Left cardiac atrium (tissue), 4 donors: ENCODE measurements at regions of chr17 and their contacts with region 1.

Region 1: DNA sequence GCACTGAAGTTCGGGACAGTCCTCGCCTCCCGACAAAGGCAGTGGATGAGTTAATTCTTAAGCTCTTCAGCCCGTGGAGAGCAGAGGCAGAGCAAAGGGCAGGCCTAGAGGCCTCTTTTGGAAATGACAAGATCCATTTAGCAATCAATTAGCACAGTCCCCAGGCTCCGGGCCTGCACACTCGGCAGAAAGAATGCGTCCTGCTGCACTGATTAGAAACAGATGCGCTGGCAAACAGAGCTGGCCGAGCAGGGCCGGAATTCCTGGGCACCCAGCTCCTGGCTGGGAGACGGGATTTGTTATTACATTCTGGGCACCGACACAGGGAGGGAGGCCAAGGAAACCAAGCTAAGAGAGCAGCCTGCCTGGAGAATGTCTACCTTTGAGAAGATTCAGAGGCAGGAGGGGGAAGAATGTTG is 162.9 kb downstream of the COPRS start:
- DNase-seq: peak; percentile 81
- ATAC-seq: peak; percentile 93

Region 2: DNA sequence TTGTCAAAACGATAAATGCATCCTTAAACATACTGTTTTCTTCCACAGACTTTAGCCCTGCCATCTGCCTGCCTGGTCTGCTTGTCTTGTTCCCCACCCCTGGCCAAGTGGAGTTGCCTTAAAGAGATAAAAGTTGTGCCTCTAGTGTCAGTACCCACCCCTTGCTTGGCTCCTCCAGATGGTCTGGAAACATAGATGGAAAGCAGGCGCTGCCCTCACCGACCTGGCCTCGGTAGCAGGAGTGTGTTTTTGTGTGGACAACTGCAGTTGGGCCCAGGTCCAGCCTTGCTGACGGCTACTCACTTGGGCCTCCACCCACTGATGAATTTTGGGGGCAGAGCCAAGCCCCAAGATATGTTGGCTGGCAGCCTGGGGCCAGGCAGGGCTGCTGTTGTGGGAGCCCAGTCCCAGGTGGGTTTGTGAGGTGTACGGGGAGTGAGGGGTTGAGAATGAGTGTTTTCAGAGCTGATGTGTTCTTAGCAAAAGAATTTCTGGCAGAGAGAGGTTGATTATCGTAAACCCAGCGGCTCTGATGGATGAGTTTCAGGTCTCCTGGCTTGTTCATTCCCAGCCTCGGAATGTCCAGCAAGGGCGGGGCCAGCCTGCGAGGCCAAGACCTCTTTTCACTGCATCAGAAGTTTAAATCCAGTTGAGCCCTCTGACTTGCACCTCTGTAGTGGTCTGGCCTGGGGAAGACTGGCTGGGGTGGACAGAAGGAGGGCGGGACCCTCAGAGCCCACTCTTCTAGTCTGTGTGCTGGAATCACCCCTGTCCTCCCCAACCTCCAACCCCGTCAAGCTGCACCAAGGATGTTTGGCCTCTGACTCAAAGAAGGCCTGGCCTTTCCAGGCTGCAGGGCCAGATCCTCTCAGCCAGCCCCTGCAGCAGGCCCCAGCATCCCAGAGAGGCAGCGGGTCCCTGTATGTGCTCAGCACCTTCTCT is 125.0 kb before region 1 on chr17:
- intact Hi-C with region 1: loop called in 1 of 2 experiments (anchors 5 kb)
- DNase-seq: peak; percentile 90
- ATAC-seq: peak; percentile 65 to 87

Region 3: DNA sequence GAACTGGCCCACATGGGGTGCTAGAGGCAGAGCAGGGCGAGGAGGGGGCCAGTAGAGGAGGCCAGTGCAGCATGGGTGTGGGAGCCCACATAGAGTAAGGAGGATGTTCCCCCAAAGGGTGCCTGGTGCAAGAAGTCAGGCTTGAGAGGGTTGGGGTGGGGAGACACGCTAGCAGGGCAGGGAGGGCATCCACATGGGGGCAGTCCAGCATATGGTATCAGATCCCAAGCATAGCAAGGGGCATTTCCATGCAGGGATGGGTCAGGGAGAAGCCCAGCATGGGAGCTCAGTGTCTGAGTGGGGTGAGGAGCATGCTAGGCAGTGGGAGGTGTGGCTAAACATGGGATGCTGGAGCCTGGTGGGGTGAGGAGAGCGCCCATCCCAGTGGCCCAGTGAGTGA is 50.8 kb before region 1 on chr17:
- intact Hi-C with region 1: no loop called
- DNase-seq: no peak
- ATAC-seq: no peak